Ascending aorta (tissue), 2 donors: ENCODE measurements at regions of chr5 and their contacts with region 1.

Region 1: GRCh38 chr5:172854451-172854871 is 20.4 kb downstream of the ERGIC1 start:
- DNase-seq: peak in 1 of 2 donors; percentile 82
- H3K4me3 ChIP-seq: no peak overlapping the region
- H3K27ac ChIP-seq: peak overlapping the region; percentile 88 to 97
- H3K4me1 ChIP-seq: peaks cover 35 to 77% of the 10 kb centered on the region in 2 donors
- H3K27me3 ChIP-seq: no peaks in the 10 kb centered on the region
- CTCF ChIP-seq: no peak

Region 2: DNA sequence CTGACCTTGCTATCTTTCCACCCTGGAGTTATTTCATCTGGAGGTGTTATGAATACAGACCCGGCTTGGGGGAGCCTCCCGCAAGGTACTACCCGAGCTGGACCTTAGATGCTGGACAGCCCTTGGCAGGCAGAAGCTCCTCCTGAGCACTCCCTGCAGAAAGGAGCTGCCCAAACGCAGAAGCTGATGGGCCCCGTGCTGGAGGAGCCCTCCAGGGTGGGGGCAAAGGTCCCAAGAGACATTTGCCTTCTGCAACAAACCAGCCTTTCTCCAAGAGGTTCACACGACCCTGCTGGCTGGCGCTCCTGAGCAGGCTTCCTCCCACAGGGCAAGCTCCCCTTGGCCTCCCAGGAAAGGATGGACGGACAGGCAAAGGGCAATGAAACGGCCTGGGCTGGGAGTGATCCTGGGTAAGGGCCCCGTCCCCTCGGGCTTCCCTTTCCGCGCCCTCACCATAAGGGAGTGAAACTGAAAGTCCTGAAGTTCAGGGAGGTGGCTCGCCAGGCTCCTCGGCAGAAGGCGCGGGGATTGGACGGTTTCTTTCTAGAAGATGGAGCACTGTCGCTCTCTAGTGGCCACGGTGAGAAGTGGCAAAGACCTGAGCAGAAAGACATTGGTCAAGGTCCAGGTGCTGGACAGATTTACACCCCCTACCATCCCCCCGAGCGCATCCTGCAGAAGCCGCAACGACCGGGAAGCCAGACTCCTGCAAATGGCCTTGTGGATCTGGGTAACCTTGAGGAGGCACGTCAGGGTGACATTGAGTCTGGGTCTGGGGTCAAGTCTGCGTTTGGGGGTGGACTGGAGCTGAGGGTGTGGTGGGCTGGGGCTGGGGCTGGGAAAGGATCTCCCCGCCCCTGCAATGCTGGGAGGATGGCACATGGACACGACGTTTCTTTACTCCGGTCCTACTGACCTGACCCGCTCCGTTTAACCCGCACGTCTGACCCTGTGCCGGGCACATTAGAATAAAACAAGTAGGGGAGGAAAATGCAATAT is 157.0 kb before region 1 on chr5:
- intact Hi-C with region 1: no loop called
- DNase-seq: peak; percentile 46 to 94
- H3K4me3 ChIP-seq: peak overlapping the region; percentile 60 to 79
- H3K27ac ChIP-seq: peak overlapping the region; percentile 75 to 81
- H3K4me1 ChIP-seq: peaks cover 0 to 34% of the 10 kb centered on the region in 2 donors
- H3K27me3 ChIP-seq: no peaks in the 10 kb centered on the region
- CTCF ChIP-seq: peak; percentile 91 to 97 (median 91)

Region 3: GRCh38 chr5:172806897-172807672 is 47.4 kb before region 1 on chr5:
- intact Hi-C with region 1: loop called (anchors 2 kb)
- DNase-seq: peak; percentile 84 to 95
- H3K4me3 ChIP-seq: peak overlapping the region; percentile 35 to 55
- H3K27ac ChIP-seq: peak overlapping the region; percentile 50 to 59
- H3K4me1 ChIP-seq: peaks cover 0 to 7% of the 10 kb centered on the region in 2 donors
- H3K27me3 ChIP-seq: no peaks in the 10 kb centered on the region
- CTCF ChIP-seq: no peak

Region 4: DNA sequence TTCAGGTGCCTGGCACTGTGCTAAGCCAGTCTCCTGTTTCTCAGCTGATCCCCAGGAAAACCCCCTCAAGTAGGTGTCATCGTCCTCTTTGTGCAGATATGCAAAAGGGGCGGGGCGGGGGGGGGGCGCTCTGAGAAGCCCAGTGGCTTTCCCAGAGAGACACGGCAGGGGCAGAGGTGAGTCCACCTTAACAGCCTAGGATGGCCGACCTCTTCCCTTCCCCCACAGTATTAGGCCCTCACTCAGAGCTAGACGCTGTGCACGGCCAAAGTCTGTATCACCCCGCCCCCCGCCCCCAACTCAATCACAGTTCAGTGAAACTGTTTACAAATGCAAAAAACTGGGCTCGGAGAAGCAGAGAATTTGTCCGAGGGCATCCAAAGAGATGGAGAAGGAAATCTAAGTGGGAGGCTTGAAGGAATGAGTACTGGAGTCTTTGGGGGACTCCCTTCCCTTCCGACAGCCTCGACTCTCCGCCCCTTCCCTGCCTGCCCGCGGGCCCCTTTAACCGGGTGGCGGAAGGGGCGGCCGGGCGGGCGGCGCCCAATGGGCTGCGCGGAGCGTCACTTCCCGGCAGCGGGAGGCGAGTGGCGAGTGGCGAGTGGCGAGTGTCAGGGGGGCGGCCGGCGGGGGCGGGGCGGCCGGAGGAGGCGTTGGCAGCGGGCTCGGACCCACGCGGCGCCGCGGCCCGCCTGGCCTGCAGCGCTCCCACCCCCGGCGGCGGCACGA is 20.6 kb before region 1 on chr5 and contains the start of gene ERGIC1:
- intact Hi-C with region 1: loop called (anchors 1 kb)
- DNase-seq: peak in 1 of 2 donors; percentile 92
- H3K4me3 ChIP-seq: peak within 1 kb of the TSS; percentile 81 to 95
- H3K27ac ChIP-seq: peak within 1 kb of the TSS; percentile 86 to 89
- H3K4me1 ChIP-seq: peaks cover 0 to 31% of the 10 kb centered on the region in 2 donors
- H3K27me3 ChIP-seq: no peaks in the 10 kb centered on the region
- CTCF ChIP-seq: no peak
- total RNA-seq, gene ERGIC1: 184 TPM